Ovary (tissue), 10 donors: ENCODE measurements at regions of chr20 and their contacts with region 1.

Region 1: DNA sequence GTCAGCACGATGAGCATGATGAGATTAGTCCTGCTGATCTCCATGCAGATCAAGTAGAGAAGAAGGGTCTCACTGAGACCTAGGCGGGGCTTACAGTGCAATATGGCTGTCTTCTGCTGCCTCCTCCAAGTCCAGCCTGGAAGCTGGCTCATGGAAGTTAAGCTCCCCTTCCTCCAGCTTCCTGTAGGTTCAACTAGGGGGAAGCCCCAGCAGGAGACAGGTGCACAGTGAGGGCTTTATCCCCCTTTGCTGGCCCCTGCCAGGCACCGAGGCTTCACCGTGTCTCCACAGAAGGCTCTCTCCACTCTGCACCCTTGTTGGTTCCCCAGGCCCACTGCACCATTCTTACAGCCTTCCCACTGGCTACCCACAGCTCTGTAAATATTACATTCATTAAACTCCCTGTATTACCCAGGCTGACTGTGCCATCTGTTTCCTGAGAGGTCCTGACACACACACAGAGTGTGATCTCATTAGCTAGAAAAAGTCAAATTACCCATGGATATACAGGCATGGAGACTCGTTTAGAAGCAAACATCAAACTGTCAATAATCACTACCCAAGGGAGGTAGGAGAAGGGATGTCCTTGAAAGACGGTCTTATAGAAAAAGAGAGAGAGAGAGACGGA is 90.4 kb downstream of the SLC2A10 start:
- DNase-seq: no peak
- H3K4me3 ChIP-seq: no peak overlapping the region
- H3K27ac ChIP-seq: no peak overlapping the region
- H3K4me1 ChIP-seq: no peaks in the 10 kb centered on the region
- H3K27me3 ChIP-seq: no peaks in the 10 kb centered on the region
- CTCF ChIP-seq: no peak
- EP300 ChIP-seq: no peak
- POLR2A ChIP-seq: no peak

Region 2: DNA sequence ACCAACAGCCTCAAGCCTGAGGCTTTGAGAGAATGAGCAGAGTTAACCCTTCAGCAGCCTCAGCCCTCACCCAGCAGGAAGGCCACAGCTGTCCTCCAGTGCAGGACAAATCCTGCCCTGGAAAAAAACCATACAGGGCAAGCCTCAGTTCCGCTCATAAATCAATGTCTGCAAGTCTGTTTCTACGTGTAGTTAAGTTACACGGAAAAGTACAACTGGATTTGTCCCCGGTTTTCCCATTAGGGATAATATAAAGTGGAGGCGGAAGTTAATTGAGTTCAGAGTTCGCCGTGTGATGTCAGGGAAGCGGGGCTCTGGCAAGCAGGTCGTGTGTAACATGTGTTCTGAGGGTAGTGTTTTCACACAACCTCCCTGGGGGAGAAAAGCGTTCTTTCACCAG is 50.5 kb after region 1 on chr20:
- intact Hi-C with region 1: loop called in 1 of 4 experiments (anchors 10 kb)
- DNase-seq: no peak
- H3K4me3 ChIP-seq: no peak overlapping the region
- H3K27ac ChIP-seq: no peak overlapping the region
- H3K4me1 ChIP-seq: no peaks in the 10 kb centered on the region
- H3K27me3 ChIP-seq: no peaks in the 10 kb centered on the region
- CTCF ChIP-seq: no peak
- EP300 ChIP-seq: no peak
- POLR2A ChIP-seq: no peak

Region 3: GRCh38 chr20:46928580-46929132 is 128.8 kb after region 1 on chr20:
- intact Hi-C with region 1: no loop called
- DNase-seq: no peak
- H3K4me3 ChIP-seq: no peak overlapping the region
- H3K27ac ChIP-seq: no peak overlapping the region
- H3K4me1 ChIP-seq: no peaks in the 10 kb centered on the region
- H3K27me3 ChIP-seq: no peaks in the 10 kb centered on the region
- CTCF ChIP-seq: no peak
- EP300 ChIP-seq: no peak
- POLR2A ChIP-seq: no peak